ENCODE measurements at regions of chr13 and their contacts with region 1.

Region 1: GRCh38 chr13:40982772-40983171 is 36.3 kb downstream of the ELF1 start:
- H3K4me3 Mint-ChIP-seq: no peak overlapping the region
- H3K27ac Mint-ChIP-seq: peak overlapping the region; percentile 89
- H3K4me1 Mint-ChIP-seq: peaks cover 58% of the 10 kb centered on the region
- H3K27me3 Mint-ChIP-seq: no peaks in the 10 kb centered on the region

Region 2: DNA sequence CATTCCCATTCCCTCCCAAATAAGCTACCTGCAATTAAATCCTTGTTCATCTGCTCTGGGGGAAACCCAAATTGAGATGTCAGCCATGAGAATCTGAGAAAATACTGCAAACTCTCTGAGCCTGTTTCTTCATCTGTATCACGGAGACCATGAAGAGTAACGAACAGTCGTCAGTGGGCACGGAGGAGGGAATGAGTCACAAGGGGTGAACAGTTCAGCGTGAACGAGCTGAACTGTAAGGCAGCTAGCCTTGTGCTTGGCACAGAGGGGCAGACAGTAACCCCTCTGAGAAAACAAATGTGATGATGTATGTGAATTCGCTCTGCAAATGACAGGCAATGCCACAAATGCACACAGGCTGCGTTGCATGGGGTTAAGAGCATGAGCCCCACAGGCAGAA is 605.0 kb before region 1 on chr13:
- intact Hi-C with region 1: no loop called
- H3K4me3 Mint-ChIP-seq: no peak overlapping the region
- H3K27ac Mint-ChIP-seq: no peak overlapping the region
- H3K4me1 Mint-ChIP-seq: peaks cover 22% of the 10 kb centered on the region
- H3K27me3 Mint-ChIP-seq: peaks cover 22% of the 10 kb centered on the region

Region 3: DNA sequence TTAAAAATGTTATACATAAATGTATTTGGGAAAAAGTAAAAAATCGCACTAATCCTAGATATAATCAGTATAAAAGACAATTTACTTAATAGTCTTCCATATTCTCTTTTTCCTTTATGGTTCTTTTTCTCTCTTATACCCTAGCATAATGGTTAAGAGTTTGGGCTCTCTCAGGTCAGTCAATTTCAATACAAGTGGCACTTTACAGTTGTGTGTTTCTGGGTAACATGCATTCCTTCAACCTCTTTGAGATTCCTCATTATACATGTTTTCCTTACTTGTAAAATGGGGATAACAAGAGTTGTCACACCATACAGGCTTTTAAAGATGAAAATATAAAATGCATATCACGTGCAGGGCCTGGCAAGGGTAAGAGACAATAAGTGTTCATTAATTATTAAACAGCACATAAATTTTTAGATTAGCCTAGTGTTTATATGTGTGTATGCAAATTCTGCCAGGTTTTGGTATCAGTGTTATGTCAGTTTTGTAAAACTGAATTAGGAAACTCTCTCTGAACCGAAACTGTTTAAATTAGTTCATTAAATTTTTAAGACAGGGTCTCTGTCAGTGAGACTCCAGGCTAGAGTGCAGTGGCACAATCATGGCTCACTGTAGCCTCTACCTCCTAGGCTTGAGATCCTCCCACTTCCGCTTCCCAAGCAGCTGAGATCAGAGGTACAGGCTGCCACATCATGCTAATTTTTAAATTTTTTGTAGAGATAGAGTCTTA is 13.4 kb before region 1 on chr13:
- intact Hi-C with region 1: loop called (anchors 2 kb)
- H3K4me3 Mint-ChIP-seq: no peak overlapping the region
- H3K27ac Mint-ChIP-seq: peak overlapping the region; percentile 70
- H3K4me1 Mint-ChIP-seq: peaks cover 65% of the 10 kb centered on the region
- H3K27me3 Mint-ChIP-seq: no peaks in the 10 kb centered on the region

Region 4: DNA sequence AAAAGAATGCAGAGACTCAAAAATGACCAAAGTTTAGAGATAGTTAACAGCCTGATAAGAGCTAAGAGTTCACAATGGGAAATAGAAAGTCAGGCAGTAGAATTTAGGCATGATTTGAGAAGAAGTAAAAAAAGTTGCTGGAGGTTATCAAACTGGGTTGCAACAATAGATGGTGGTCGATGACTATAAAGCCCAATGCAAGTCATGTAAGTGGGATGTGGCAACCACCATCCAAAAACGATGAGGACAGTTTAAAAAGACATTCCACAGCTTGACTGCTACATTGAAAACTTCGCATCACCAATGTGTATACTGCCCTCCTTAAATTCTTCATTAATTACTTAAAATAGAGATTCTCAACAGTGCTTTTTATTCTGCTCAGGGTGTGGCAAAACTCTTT is 16.6 kb after region 1 on chr13:
- intact Hi-C with region 1: loop called (anchors 2 kb)
- H3K4me3 Mint-ChIP-seq: no peak overlapping the region
- H3K27ac Mint-ChIP-seq: no peak overlapping the region
- H3K4me1 Mint-ChIP-seq: peaks cover 68% of the 10 kb centered on the region
- H3K27me3 Mint-ChIP-seq: no peaks in the 10 kb centered on the region

Region 5: GRCh38 chr13:41019011-41019487 is 36.3 kb after region 1 on chr13 and contains the start of gene ELF1:
- intact Hi-C with region 1: loop called (anchors 5 kb)
- H3K4me3 Mint-ChIP-seq: peak within 1 kb of the TSS; percentile 81
- H3K27ac Mint-ChIP-seq: peak within 1 kb of the TSS; percentile 96
- H3K4me1 Mint-ChIP-seq: peaks cover 44% of the 10 kb centered on the region
- H3K27me3 Mint-ChIP-seq: no peaks in the 10 kb centered on the region

Measured in dendritic cell treated with granulocyte-macrophage colony-stimulating factor and Interleukin-4, amounts not matched to agents 40 ng/mL and 50 ng/mL, for 4 days (primary cell).